ENCODE measurements at regions of chr6 and their contacts with region 1.

Region 1: GRCh38 chr6:4281341-4282293 is 146.2 kb upstream of the ECI2 start:
- DNase-seq: peak; percentile 60
- ATAC-seq: peak; percentile 97
- H3K4me3 Mint-ChIP-seq: peak overlapping the region; percentile 73
- H3K27ac Mint-ChIP-seq: peak overlapping the region; percentile 76
- H3K4me1 Mint-ChIP-seq: peaks cover 18% of the 10 kb centered on the region
- H3K27me3 Mint-ChIP-seq: peaks cover 26% of the 10 kb centered on the region
- CTCF ChIP-seq: no peak

Region 2: GRCh38 chr6:3372007-3372846 is 909.4 kb before region 1 on chr6:
- CTCF ChIA-PET with region 1: no interaction called
- POLR2A ChIA-PET with region 1: no interaction called
- intact Hi-C with region 1: no loop called
- DNase-seq: no peak
- ATAC-seq: no peak
- H3K4me3 Mint-ChIP-seq: no peak overlapping the region
- H3K27ac Mint-ChIP-seq: no peak overlapping the region
- H3K4me1 Mint-ChIP-seq: peaks cover 6% of the 10 kb centered on the region
- H3K27me3 Mint-ChIP-seq: peaks cover 15% of the 10 kb centered on the region
- CTCF ChIP-seq: no peak

Region 3: GRCh38 chr6:4059115-4059777 is 222.4 kb before region 1 on chr6:
- CTCF ChIA-PET with region 1: no interaction called
- POLR2A ChIA-PET with region 1: no interaction called
- intact Hi-C with region 1: no loop called
- DNase-seq: no peak
- ATAC-seq: no peak
- H3K4me3 Mint-ChIP-seq: no peak overlapping the region
- H3K27ac Mint-ChIP-seq: peak overlapping the region; percentile 19
- H3K4me1 Mint-ChIP-seq: no peaks in the 10 kb centered on the region
- H3K27me3 Mint-ChIP-seq: no peaks in the 10 kb centered on the region
- CTCF ChIP-seq: no peak

Region 4: DNA sequence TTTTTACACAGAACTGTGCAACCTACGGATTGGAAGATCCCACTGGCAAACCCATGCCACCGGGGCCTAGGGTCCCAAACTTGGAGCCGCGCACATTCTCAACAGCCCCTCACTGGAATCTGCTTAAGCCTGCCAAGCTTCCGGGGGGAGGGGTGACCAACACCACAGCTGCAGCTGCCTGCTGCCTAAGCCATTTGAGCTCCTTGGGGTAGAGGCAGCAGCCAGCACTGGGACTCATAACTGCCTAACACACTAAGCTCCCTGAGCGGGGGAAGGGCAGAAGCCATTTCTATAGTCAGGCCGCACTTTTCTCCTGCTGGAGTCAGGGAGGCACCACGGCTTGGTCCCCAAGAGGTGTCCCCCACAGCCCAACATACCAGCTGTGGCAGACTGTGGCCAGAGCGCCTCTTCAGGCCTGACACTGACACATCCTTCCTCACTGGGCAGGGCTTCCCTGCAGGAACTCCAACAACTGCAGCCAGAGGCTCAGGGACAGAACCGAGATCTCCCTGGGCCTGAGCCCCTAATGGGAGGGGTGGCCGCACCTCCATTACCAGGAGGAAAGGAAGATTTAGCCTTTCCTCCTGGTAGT is 124.1 kb after region 1 on chr6:
- CTCF ChIA-PET with region 1: no interaction called
- POLR2A ChIA-PET with region 1: no interaction called
- intact Hi-C with region 1: loop called (anchors 2 kb)
- DNase-seq: no peak
- ATAC-seq: no peak
- H3K4me3 Mint-ChIP-seq: no peak overlapping the region
- H3K27ac Mint-ChIP-seq: no peak overlapping the region
- H3K4me1 Mint-ChIP-seq: peaks cover 46% of the 10 kb centered on the region
- H3K27me3 Mint-ChIP-seq: peaks cover 7% of the 10 kb centered on the region
- CTCF ChIP-seq: no peak

Region 5: DNA sequence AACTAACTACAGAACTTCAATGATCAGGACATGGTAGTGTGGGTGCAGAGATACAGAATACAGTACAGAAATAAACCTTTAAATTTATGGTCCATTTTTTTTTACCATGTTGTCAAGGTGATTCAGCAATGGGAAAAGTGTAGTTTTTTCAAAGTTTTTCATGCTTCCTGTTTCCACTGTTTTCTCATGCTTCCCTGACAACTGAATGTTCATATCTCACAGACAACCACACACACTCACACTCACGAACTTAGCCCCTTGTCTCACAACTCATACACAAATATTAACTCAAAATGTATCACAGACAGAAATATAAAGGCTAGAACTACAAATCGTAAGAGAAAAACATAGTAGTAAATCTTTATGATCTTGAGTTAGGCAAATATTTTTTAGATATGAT is 262.0 kb after region 1 on chr6:
- CTCF ChIA-PET with region 1: no interaction called
- POLR2A ChIA-PET with region 1: no interaction called
- intact Hi-C with region 1: no loop called
- DNase-seq: no peak
- ATAC-seq: no peak
- H3K4me3 Mint-ChIP-seq: no peak overlapping the region
- H3K27ac Mint-ChIP-seq: no peak overlapping the region
- H3K4me1 Mint-ChIP-seq: no peaks in the 10 kb centered on the region
- H3K27me3 Mint-ChIP-seq: peaks cover 3% of the 10 kb centered on the region
- CTCF ChIP-seq: no peak

Region 6: GRCh38 chr6:4801491-4802110 is 520.0 kb after region 1 on chr6:
- CTCF ChIA-PET with region 1: interaction called, 5 read pairs
- POLR2A ChIA-PET with region 1: no interaction called
- intact Hi-C with region 1: loop called (anchors 5 kb)
- DNase-seq: no peak
- ATAC-seq: peak; percentile 69
- H3K4me3 Mint-ChIP-seq: peak overlapping the region; percentile 16
- H3K27ac Mint-ChIP-seq: peak overlapping the region; percentile 46
- H3K4me1 Mint-ChIP-seq: peaks cover 82% of the 10 kb centered on the region
- H3K27me3 Mint-ChIP-seq: no peaks in the 10 kb centered on the region
- CTCF ChIP-seq: no peak

Region 7: GRCh38 chr6:4936681-4937041 is 655.0 kb after region 1 on chr6:
- CTCF ChIA-PET with region 1: interaction called, 5 read pairs
- POLR2A ChIA-PET with region 1: interaction called, 4 read pairs
- intact Hi-C with region 1: loop called (anchors 1 kb)
- DNase-seq: no peak
- ATAC-seq: peak; percentile 50
- H3K4me3 Mint-ChIP-seq: no peak overlapping the region
- H3K27ac Mint-ChIP-seq: no peak overlapping the region
- H3K4me1 Mint-ChIP-seq: peaks cover 20% of the 10 kb centered on the region
- H3K27me3 Mint-ChIP-seq: no peaks in the 10 kb centered on the region
- CTCF ChIP-seq: no peak

Region 8: GRCh38 chr6:5030596-5031136 is 749.0 kb after region 1 on chr6:
- CTCF ChIA-PET with region 1: no interaction called
- POLR2A ChIA-PET with region 1: no interaction called
- intact Hi-C with region 1: loop called (anchors 1 kb)
- DNase-seq: peak; percentile 48
- ATAC-seq: peak; percentile 96
- H3K4me3 Mint-ChIP-seq: no peak overlapping the region
- H3K27ac Mint-ChIP-seq: no peak overlapping the region
- H3K4me1 Mint-ChIP-seq: peaks cover 23% of the 10 kb centered on the region
- H3K27me3 Mint-ChIP-seq: peaks cover 3% of the 10 kb centered on the region
- CTCF ChIP-seq: no peak

Measured in activated B cell treated with CpG ODN at 0.5 μM for 24 hours (primary cell).